ENCODE measurements at regions of chr14 and their contacts with region 1.

Region 1: GRCh38 chr14:73458151-73458976 is at the start of gene NUMB:
- ATAC-seq: peak; percentile 93 to 97 (median 96)
- H3K4me3 ChIP-seq: peak within 1 kb of the TSS; percentile 69 to 97 (median 88)
- H3K27ac ChIP-seq: peak within 1 kb of the TSS; percentile 43 to 82
- H3K4me1 ChIP-seq: peaks cover 7 to 10% of the 10 kb centered on the region in 2 donors
- total RNA-seq, gene NUMB: 13.4 to 56.8 (median 25.3) TPM

Region 2: GRCh38 chr14:73173092-73173735 is 285.1 kb before region 1 on chr14:
- in situ Hi-C with region 1: loop called in 3 of 9 experiments (anchors 25 kb)
- ATAC-seq: peak in 3 of 8 experiments; percentile 49 to 63 (median 53)
- H3K4me3 ChIP-seq: no peak overlapping the region
- H3K27ac ChIP-seq: no peak overlapping the region
- H3K4me1 ChIP-seq: peaks cover 0 to 4% of the 10 kb centered on the region in 2 donors

Region 3: GRCh38 chr14:73180385-73180805 is 278.0 kb before region 1 on chr14:
- in situ Hi-C with region 1: loop called in 1 of 9 experiments (anchors 25 kb)
- ATAC-seq: peak in 3 of 8 experiments; percentile 62 to 91 (median 90)
- H3K4me3 ChIP-seq: no peak overlapping the region
- H3K27ac ChIP-seq: no peak overlapping the region
- H3K4me1 ChIP-seq: no peaks in the 10 kb centered on the region

Region 4: GRCh38 chr14:73295198-73295796 is 163.1 kb before region 1 on chr14:
- in situ Hi-C with region 1: loop called in 3 of 9 experiments (anchors 10 to 25 kb)
- ATAC-seq: peak in 2 of 8 experiments; percentile 32 to 42
- H3K4me3 ChIP-seq: no peak overlapping the region
- H3K27ac ChIP-seq: no peak overlapping the region
- H3K4me1 ChIP-seq: no peaks in the 10 kb centered on the region

Region 5: DNA sequence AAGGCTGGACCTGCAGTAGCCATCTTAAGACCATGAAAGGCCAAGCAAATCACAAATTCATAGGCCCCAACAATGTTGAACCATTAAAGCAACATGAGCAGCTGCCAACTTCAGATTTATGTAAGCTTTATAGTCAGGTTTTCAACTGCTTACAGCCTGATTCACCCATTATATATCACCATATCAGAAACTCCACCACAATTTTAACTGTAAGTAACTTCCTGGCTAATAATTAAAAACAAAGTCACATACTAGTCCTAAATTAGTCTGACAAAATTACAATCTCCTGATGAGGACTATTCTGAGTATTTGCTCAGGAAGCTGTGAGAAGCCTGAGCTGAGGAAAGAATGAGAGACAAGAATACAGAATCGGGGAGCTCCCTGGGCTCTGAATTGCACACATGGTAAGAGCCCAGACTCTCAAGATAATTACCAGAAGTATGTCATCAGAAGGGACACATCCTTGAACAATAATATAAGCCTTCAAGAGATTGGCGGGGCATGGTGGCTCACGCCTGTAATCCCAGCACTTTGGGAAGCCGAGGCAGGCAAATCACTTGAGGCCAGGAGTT is 55.1 kb before region 1 on chr14:
- in situ Hi-C with region 1: no loop called
- ATAC-seq: no peak
- H3K4me3 ChIP-seq: no peak overlapping the region
- H3K27ac ChIP-seq: no peak overlapping the region
- H3K4me1 ChIP-seq: no peaks in the 10 kb centered on the region

Measured in motor neuron (in vitro differentiated cells).